Activated B cell treated with CpG ODN at 0.5 μM for 24 hours (primary cell): ENCODE measurements at regions of chr12 and their contacts with region 1.

Region 1: GRCh38 chr12:56468216-56469006 is at the start of gene SPRYD4:
- DNase-seq: peak; percentile 92
- ATAC-seq: peak; percentile 90
- H3K4me3 Mint-ChIP-seq: peak within 1 kb of the TSS; percentile 94
- H3K27ac Mint-ChIP-seq: peak within 1 kb of the TSS; percentile 94
- H3K4me1 Mint-ChIP-seq: peaks cover 36% of the 10 kb centered on the region
- H3K27me3 Mint-ChIP-seq: no peaks in the 10 kb centered on the region
- CTCF ChIP-seq: no peak
- total RNA-seq, gene SPRYD4: 5.8 and 7.5 TPM in 2 replicates

Region 2: DNA sequence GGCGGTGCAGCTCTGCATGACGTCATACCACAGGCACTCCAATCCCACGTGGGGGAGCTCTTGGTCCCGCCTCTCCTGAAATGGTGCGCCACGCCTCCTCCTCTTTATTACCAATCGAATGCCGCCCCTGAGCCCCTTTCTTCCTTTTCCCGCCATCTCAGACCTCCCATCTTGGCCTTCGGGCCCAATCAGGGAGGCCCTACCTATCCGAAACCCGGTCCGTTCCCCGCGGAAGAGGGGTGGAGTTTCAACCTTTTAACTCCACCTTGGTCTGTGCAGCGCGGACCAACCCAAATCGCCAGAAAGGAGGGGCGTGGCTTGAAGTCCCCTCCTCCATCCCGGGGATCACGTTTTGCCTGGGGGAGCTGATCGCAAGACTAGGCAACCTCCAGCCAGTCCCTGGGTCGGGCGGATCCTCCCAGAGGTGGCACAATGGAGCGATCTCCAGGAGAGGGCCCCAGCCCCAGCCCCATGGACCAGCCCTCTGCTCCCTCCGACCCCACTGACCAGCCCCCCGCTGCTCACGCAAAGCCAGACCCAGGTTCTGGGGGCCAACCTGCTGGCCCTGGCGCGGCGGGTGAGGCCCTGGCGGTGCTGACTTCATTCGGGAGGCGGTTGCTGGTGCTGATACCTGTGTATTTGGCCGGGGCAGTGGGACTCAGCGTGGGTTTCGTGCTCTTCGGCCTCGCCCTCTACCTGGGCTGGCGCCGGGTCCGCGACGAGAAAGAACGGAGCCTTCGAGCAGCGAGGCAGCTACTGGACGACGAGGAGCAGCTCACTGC is 340.3 kb before region 1 on chr12 and contains the start of gene ESYT1:
- CTCF ChIA-PET with region 1: interaction called, 8 read pairs
- POLR2A ChIA-PET with region 1: interaction called, 3 read pairs
- intact Hi-C with region 1: loop called (anchors 1 kb)
- DNase-seq: peak; percentile 83
- ATAC-seq: peak; percentile 86
- H3K4me3 Mint-ChIP-seq: peak within 1 kb of the TSS; percentile 97
- H3K27ac Mint-ChIP-seq: peak within 1 kb of the TSS; percentile 98
- H3K4me1 Mint-ChIP-seq: peaks cover 69% of the 10 kb centered on the region
- H3K27me3 Mint-ChIP-seq: no peaks in the 10 kb centered on the region
- CTCF ChIP-seq: no peak
- total RNA-seq, gene ESYT1: 120 and 137 TPM in 2 replicates

Region 3: GRCh38 chr12:56258057-56258819 is 210.2 kb before region 1 on chr12 and contains the start of gene ANKRD52:
- CTCF ChIA-PET with region 1: interaction called, 11 read pairs
- POLR2A ChIA-PET with region 1: interaction called, 3 read pairs
- intact Hi-C with region 1: loop called (anchors 1 kb)
- DNase-seq: peak; percentile 89
- ATAC-seq: peak; percentile 94
- H3K4me3 Mint-ChIP-seq: peak within 1 kb of the TSS; percentile 91
- H3K27ac Mint-ChIP-seq: peak within 1 kb of the TSS; percentile 77
- H3K4me1 Mint-ChIP-seq: peaks cover 21% of the 10 kb centered on the region
- H3K27me3 Mint-ChIP-seq: no peaks in the 10 kb centered on the region
- CTCF ChIP-seq: peak; percentile 28
- total RNA-seq, gene ANKRD52: 44.1 and 44.8 TPM in 2 replicates

Region 4: GRCh38 chr12:56286044-56286830 is 182.2 kb before region 1 on chr12:
- CTCF ChIA-PET with region 1: interaction called, 13 read pairs
- POLR2A ChIA-PET with region 1: no interaction called
- intact Hi-C with region 1: no loop called
- DNase-seq: no peak
- ATAC-seq: no peak
- H3K4me3 Mint-ChIP-seq: no peak overlapping the region
- H3K27ac Mint-ChIP-seq: no peak overlapping the region
- H3K4me1 Mint-ChIP-seq: peaks cover 8% of the 10 kb centered on the region
- H3K27me3 Mint-ChIP-seq: no peaks in the 10 kb centered on the region
- CTCF ChIP-seq: no peak

Region 5: GRCh38 chr12:56315622-56316473 is 152.6 kb before region 1 on chr12 and contains the start of gene CNPY2:
- CTCF ChIA-PET with region 1: interaction called, 51 read pairs
- POLR2A ChIA-PET with region 1: interaction called, 27 read pairs
- intact Hi-C with region 1: loop called (anchors 1 kb)
- DNase-seq: peak; percentile 85
- ATAC-seq: peak; percentile 89
- H3K4me3 Mint-ChIP-seq: peak within 1 kb of the TSS; percentile 98
- H3K27ac Mint-ChIP-seq: peak within 1 kb of the TSS; percentile 98
- H3K4me1 Mint-ChIP-seq: peaks cover 21% of the 10 kb centered on the region
- H3K27me3 Mint-ChIP-seq: no peaks in the 10 kb centered on the region
- CTCF ChIP-seq: no peak
- total RNA-seq, gene CNPY2: 72.1 and 98.8 TPM in 2 replicates

Region 6: GRCh38 chr12:56377310-56377988 is 91.0 kb before region 1 on chr12:
- CTCF ChIA-PET with region 1: no interaction called
- POLR2A ChIA-PET with region 1: interaction called, 4 read pairs
- intact Hi-C with region 1: loop called (anchors 1 kb)
- DNase-seq: no peak
- ATAC-seq: no peak
- H3K4me3 Mint-ChIP-seq: no peak overlapping the region
- H3K27ac Mint-ChIP-seq: peak overlapping the region; percentile 94
- H3K4me1 Mint-ChIP-seq: peaks cover 53% of the 10 kb centered on the region
- H3K27me3 Mint-ChIP-seq: no peaks in the 10 kb centered on the region
- CTCF ChIP-seq: no peak

Region 7: DNA sequence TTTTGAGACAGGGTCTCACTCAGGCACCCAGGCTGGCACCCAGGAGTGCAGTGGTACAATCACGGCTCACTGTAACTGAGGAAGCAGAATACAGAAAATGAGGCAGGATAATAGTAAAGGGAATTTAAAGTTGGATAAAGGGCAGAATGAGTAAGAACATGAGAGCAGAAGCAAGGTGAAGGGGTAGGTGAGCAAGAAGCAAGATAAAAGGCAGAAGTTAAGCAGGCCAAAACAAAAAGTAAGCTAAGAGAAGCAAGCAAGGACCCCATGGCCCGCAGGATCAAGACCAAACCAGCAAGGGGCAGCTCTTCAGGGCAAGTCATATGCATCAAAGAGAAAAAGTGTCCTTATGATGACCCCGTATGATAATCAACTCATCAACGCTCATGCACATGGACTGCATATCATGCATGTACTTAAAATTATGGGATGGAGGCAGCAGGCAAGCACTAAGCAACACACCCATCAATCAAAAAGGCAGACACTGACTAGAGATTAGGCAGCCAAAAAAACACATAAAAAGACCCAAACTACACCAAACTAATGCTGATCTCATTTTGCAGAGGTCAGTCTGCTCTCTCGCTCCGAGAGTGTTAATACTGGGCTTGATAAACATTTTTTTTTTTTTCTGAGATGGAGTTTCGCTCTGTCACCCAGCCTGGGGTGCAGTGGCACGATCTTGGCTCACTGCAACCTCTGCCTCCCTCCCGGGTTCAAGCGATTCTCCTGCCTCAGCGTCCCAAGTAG is 30.8 kb before region 1 on chr12:
- CTCF ChIA-PET with region 1: no interaction called
- POLR2A ChIA-PET with region 1: no interaction called
- intact Hi-C with region 1: no loop called
- DNase-seq: no peak
- ATAC-seq: no peak
- H3K4me3 Mint-ChIP-seq: no peak overlapping the region
- H3K27ac Mint-ChIP-seq: no peak overlapping the region
- H3K4me1 Mint-ChIP-seq: peaks cover 3% of the 10 kb centered on the region
- H3K27me3 Mint-ChIP-seq: no peaks in the 10 kb centered on the region
- CTCF ChIP-seq: no peak